ENCODE measurements at regions of chr1 and their contacts with region 1.

Region 1: GRCh38 chr1:202184750-202185460 is 8.7 kb upstream of the LGR6 start:
- DNase-seq: peak; percentile 85
- ATAC-seq: peak; percentile 79
- H3K4me3 Mint-ChIP-seq: no peak overlapping the region
- H3K27ac Mint-ChIP-seq: no peak overlapping the region
- H3K4me1 Mint-ChIP-seq: peaks cover 12% of the 10 kb centered on the region
- H3K27me3 Mint-ChIP-seq: peaks cover 2% of the 10 kb centered on the region

Region 2: DNA sequence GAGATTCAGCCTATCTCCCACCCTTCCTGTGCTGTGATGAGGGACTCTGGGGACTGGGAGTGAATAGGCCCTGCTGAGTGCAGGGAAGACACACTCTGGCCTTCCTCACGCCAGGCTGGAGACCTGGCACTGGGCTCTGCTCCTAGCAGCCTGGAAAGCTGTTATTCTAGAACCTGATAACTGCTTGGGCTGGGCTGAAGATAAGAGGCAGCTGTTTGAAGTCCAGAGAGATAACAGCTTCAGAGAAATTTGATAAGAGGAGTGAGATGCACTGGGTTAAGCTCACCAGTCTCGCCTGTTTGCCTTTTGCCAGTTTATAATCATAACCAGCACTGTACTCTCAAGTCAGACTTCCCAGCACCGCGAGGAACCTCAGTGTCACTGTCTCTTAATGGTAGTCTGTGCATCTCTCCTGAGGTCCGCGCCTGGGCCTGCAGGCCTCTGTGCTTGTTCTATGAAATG is 108.8 kb before region 1 on chr1:
- CTCF ChIA-PET with region 1: no interaction called
- POLR2A ChIA-PET with region 1: no interaction called
- intact Hi-C with region 1: no loop called
- DNase-seq: no peak
- ATAC-seq: no peak
- H3K4me3 Mint-ChIP-seq: no peak overlapping the region
- H3K27ac Mint-ChIP-seq: no peak overlapping the region
- H3K4me1 Mint-ChIP-seq: no peaks in the 10 kb centered on the region
- H3K27me3 Mint-ChIP-seq: no peaks in the 10 kb centered on the region

Region 3: GRCh38 chr1:202160377-202160940 is 24.4 kb before region 1 on chr1 and contains the start of gene PTPN7:
- CTCF ChIA-PET with region 1: interaction called, 9 read pairs
- POLR2A ChIA-PET with region 1: no interaction called
- intact Hi-C with region 1: loop called in 1 of 2 experiments (anchors 2 kb)
- DNase-seq: peak; percentile 98
- ATAC-seq: peak; percentile 69
- H3K4me3 Mint-ChIP-seq: peak within 1 kb of the TSS; percentile 97
- H3K27ac Mint-ChIP-seq: peak within 1 kb of the TSS; percentile 99
- H3K4me1 Mint-ChIP-seq: peaks cover 80% of the 10 kb centered on the region
- H3K27me3 Mint-ChIP-seq: no peaks in the 10 kb centered on the region
- total RNA-seq, gene PTPN7: 188 to 221 TPM

Region 4: DNA sequence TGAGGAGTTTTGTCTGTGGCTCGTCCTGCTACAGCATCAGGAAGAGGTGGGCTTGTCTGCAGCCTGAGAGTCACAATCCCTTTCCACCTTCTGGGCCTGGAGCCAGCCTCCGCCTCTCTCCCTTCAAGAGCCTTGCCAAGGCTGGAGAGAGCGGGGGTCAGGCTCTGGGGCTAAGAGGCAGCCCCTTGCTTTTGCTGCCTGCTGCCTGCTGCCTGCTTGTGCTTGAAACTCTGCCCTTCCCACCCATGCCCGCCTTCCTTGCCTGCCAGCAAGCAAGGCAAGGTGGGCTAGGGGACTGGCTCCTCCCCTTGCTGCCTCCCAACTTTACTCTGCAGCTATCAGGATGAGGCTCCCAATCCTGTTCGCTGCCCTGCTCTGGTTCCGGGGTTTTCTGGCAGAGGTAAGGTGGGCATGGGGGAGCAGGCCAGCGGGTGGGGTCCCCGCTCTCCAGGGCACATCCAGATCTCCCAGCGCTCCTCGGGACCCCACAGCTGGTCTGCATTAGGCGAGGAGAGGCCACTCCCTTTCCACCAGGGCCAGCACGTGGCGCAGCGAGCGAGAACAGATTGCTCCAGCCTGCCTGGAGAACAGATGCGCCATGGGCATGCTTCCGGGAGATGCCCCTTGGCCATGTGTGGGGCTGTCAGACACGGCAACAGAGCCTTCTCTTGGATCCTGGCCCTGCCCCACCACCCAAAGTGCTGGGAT is 17.0 kb before region 1 on chr1:
- CTCF ChIA-PET with region 1: interaction called, 11 read pairs
- POLR2A ChIA-PET with region 1: no interaction called
- intact Hi-C with region 1: no loop called
- DNase-seq: no peak
- ATAC-seq: no peak
- H3K4me3 Mint-ChIP-seq: no peak overlapping the region
- H3K27ac Mint-ChIP-seq: no peak overlapping the region
- H3K4me1 Mint-ChIP-seq: peaks cover 36% of the 10 kb centered on the region
- H3K27me3 Mint-ChIP-seq: no peaks in the 10 kb centered on the region

Region 5: DNA sequence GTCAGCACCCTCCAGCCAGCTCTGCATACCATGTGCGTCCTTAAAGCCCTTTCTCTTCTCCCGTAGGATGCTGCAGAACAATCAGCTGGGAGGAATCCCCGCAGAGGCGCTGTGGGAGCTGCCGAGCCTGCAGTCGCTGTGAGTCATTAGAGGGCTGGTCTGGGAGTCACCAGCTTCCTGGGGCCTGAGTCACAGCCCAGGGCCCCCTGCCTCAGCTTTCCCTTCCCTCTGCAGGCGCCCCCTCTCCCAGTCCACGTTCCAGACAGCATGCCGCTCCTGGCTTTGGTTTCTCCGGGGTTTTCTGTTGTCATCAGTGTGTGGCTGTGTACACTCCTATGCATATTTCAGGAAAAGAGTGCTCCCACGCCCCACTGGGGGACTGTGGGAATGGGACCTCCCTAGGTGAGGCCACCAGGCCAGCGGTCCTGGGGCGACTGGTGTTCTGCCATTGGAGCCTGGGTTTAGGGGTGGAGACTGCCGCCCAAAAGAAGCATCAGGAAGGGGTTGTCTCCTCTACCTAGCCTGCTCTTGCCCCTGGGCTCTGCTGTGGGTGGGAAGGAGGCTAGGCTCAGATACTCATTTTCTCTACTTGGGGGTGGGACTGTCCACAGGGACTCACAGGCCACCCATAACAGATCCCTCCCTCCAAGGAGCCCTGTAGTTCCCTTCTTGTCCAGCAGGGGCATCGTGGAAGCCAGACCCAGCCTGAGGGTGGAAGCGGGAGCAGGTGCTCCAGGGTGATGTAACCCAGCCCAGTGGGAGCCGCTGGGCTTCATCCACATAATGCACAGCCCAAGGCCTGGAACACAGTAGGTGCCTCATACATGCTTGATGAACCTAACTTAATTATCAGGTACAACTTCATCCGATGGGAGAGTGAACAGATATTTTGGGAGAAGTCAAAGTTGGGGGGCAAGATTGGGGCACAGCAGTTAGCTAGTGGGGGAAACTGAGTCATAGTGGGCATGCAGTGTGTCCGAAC is 51.2 kb after region 1 on chr1:
- CTCF ChIA-PET with region 1: no interaction called
- POLR2A ChIA-PET with region 1: no interaction called
- intact Hi-C with region 1: loop called in 1 of 2 experiments (anchors 2 kb)
- DNase-seq: peak; percentile 84
- ATAC-seq: peak; percentile 89
- H3K4me3 Mint-ChIP-seq: no peak overlapping the region
- H3K27ac Mint-ChIP-seq: no peak overlapping the region
- H3K4me1 Mint-ChIP-seq: peaks cover 2% of the 10 kb centered on the region
- H3K27me3 Mint-ChIP-seq: peaks cover 12% of the 10 kb centered on the region

Region 6: DNA sequence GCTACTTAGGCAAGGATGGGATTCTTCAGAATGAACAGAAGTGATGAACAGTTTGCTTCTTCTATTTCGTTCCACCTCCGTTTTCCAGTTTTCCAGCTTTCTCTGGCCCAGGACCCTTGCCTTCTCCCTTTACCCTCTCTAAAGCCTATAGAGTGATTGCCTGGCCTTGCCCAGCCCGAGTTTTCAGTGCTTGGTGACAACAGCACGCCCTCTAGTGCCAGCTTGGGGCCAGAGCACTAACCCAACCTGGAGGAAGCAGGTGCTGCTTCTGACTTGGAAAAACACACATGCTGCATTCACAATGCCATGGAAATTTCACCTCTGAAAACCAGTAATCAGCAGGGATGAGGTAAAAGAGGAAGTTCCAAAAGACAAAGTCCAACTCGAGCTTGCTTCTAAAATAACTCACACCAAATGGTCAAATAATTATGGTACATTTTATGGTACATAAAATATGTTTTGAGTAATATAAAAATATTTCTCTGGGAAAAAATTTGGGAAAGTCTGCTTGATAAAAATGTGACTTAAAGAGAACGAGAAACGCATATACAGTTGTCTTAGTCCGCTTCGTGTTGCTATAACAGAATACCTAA is 130.8 kb after region 1 on chr1:
- CTCF ChIA-PET with region 1: interaction called, 18 read pairs
- POLR2A ChIA-PET with region 1: no interaction called
- intact Hi-C with region 1: loop called in 1 of 2 experiments (anchors 2 kb)
- DNase-seq: peak; percentile 87
- ATAC-seq: peak; percentile 87
- H3K4me3 Mint-ChIP-seq: no peak overlapping the region
- H3K27ac Mint-ChIP-seq: no peak overlapping the region
- H3K4me1 Mint-ChIP-seq: peaks cover 5% of the 10 kb centered on the region
- H3K27me3 Mint-ChIP-seq: peaks cover 3% of the 10 kb centered on the region

Region 7: GRCh38 chr1:202625416-202626360 is 440.8 kb after region 1 on chr1:
- CTCF ChIA-PET with region 1: no interaction called
- POLR2A ChIA-PET with region 1: no interaction called
- intact Hi-C with region 1: loop called in 1 of 2 experiments (anchors 10 kb)
- DNase-seq: peak; percentile 82
- ATAC-seq: peak; percentile 82
- H3K4me3 Mint-ChIP-seq: no peak overlapping the region
- H3K27ac Mint-ChIP-seq: no peak overlapping the region
- H3K4me1 Mint-ChIP-seq: peaks cover 27% of the 10 kb centered on the region
- H3K27me3 Mint-ChIP-seq: peaks cover 5% of the 10 kb centered on the region